ENCODE measurements at regions of chr20 and their contacts with region 1.

Region 1: GRCh38 chr20:46438156-46438750 is 31.8 kb upstream of the ELMO2 start:
- DNase-seq: peak; percentile 21
- H3K4me3 Mint-ChIP-seq: no peak overlapping the region
- H3K27ac Mint-ChIP-seq: no peak overlapping the region
- H3K4me1 Mint-ChIP-seq: no peaks in the 10 kb centered on the region
- H3K27me3 Mint-ChIP-seq: peaks cover 6% of the 10 kb centered on the region

Region 2: DNA sequence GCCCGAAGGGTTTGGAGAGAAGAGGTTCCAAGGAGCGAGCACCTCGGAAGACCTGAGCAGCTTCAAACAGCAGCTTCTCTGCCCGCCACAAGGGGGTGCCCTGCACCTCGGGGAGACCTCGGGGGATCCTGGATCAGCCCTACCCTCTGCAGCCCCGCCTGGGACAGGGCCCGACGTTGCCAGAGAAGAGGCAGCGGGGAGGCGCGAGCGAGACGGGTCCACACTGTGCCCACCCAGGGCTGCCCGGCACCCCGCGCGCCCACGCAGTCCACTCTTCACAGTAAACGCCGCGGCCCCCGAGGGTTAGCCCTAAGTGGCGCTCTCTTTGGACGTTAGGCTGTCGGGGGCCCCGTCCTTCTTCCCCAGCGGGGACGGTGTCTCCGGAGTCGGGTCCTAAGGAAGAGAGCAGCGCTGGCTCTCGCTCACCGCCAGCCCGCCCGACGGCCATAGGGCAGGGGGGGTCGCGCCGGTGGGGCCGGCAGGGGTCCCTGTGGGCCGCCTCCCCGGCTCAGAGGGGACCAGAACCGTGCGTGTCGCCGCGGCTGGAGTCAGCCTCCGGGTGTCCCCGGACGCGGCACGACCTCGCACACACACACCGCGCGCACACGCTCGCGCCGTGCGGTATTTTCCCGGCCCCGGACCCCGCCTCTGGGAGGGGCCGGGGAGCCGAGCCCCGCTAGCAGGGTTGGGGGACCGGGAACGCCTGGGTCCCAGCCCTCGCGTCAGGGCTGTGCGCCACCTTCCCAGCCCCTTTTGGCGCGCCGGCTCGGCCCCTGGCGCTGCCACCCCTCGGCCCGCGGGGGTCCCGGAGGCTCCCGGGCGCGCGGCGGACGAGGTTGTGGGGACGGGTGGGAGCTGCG is 130.9 kb before region 1 on chr20:
- CTCF ChIA-PET with region 1: interaction called, 5 read pairs
- intact Hi-C with region 1: loop called (anchors 1 kb)
- DNase-seq: peak; percentile 81
- H3K4me3 Mint-ChIP-seq: peak overlapping the region; percentile 25
- H3K27ac Mint-ChIP-seq: no peak overlapping the region
- H3K4me1 Mint-ChIP-seq: peaks cover 7% of the 10 kb centered on the region
- H3K27me3 Mint-ChIP-seq: peaks cover 57% of the 10 kb centered on the region

Measured in activated naive CD4-positive, alpha-beta T cell treated with anti-CD3 and anti-CD28 coated beads for 36 hours (primary cell).